Dendritic cell treated with granulocyte-macrophage colony-stimulating factor and Interleukin-4, amounts not matched to agents 40 ng/mL and 50 ng/mL, for 4 days (primary cell): ENCODE measurements at regions of chr2 and their contacts with region 1.

Region 1: GRCh38 chr2:159381574-159381973 is 95.1 kb upstream of the WDSUB1 start:
- H3K4me3 Mint-ChIP-seq: no peak overlapping the region
- H3K27ac Mint-ChIP-seq: no peak overlapping the region
- H3K4me1 Mint-ChIP-seq: no peaks in the 10 kb centered on the region
- H3K27me3 Mint-ChIP-seq: no peaks in the 10 kb centered on the region

Region 2: DNA sequence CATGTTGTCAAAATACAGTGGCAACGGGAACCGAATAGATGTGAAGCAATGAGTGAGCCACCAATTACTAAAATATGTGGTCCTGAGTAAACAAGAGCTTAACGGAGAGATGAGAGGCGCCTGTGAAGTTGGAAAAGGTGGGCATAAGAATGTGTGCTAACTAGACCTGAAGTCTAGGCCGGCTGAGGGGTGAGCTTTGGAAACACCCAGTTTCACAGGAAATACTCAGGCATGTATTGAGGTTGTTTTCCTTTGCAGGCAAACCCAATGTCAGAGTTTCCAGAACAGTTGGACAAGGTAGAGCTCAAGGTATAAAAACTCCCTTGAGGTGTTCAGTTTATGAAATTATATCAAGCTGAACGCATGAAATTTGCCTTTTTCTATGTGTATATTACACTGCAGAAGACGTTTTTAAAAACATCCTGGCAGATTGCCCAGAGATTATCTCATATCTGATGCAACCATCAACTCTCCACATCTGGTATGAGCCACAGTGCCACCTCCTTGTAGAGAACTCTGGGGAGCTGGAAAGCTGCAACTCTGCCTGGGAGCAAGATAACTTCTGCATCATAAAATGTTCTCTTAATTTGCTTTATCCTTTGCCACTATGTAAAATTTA is 91.2 kb before region 1 on chr2:
- intact Hi-C with region 1: no loop called
- H3K4me3 Mint-ChIP-seq: no peak overlapping the region
- H3K27ac Mint-ChIP-seq: no peak overlapping the region
- H3K4me1 Mint-ChIP-seq: peaks cover 24% of the 10 kb centered on the region
- H3K27me3 Mint-ChIP-seq: no peaks in the 10 kb centered on the region

Region 3: GRCh38 chr2:159432610-159433009 is 51.0 kb after region 1 on chr2:
- intact Hi-C with region 1: loop called (anchors 5 kb)
- H3K4me3 Mint-ChIP-seq: no peak overlapping the region
- H3K27ac Mint-ChIP-seq: no peak overlapping the region
- H3K4me1 Mint-ChIP-seq: no peaks in the 10 kb centered on the region
- H3K27me3 Mint-ChIP-seq: no peaks in the 10 kb centered on the region